ENCODE measurements at regions of chr17 and their contacts with region 1.

Region 1: GRCh38 chr17:7856883-7857723 is at the start of gene NAA38:
- DNase-seq: peak; percentile 96
- ATAC-seq: peak; percentile 84
- H3K4me3 Mint-ChIP-seq: no peak within 1 kb of the TSS
- H3K27ac Mint-ChIP-seq: no peak within 1 kb of the TSS
- H3K4me1 Mint-ChIP-seq: peaks cover 21% of the 10 kb centered on the region
- H3K27me3 Mint-ChIP-seq: peaks cover 19% of the 10 kb centered on the region
- CTCF ChIP-seq: no peak
- total RNA-seq, gene NAA38: 41.8 to 46.3 TPM (median 43.4 TPM) in 3 replicates

Region 2: GRCh38 chr17:7825206-7825990 is 31.7 kb before region 1 on chr17:
- CTCF ChIA-PET with region 1: interaction called, 11 read pairs
- POLR2A ChIA-PET with region 1: no interaction called
- DNase-seq: no peak
- ATAC-seq: no peak
- H3K4me3 Mint-ChIP-seq: no peak overlapping the region
- H3K27ac Mint-ChIP-seq: no peak overlapping the region
- H3K4me1 Mint-ChIP-seq: peaks cover 12% of the 10 kb centered on the region
- H3K27me3 Mint-ChIP-seq: peaks cover 60% of the 10 kb centered on the region
- CTCF ChIP-seq: no peak

Region 3: DNA sequence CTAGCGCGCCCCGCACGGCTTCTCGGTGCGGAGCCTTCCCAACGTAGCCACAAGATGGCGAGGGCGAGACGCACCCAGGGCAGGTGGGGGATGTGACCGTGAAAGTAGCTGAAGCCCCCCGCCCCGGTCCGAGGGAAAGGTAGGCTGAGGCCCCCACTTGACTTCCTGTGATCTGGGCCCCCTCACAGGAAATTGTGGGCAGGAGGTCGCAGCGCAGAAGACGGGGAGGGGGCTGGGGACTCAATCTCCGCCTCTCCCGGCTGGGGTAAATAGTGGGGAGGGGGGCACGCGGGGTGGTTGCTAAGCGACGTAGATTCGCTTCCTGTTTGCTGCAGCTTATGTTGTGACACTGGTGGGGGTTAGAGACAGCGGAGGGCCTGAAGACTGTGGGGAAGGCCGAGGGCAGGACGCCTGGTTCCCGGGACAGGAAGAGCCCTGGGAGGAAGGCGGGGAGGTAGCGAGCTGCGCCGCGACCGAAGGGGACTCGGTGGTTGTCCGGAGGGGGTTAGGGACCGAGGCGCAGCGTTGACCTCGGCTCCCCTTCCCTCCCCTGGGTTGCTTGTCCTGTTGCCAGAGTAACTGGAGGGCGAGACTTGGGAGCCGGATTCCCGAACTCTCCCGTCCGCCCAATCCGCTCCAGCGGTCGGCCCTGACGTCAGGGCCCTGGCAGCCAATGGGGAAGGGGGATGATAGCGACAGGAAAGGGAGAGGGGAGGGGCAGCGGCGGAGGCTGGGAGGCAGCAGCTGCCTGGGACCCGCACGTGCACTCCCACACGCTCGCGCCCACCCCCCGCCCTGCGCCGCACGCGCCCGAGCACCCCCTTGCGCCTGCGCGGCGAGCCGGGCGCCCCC is 21.9 kb before region 1 on chr17:
- CTCF ChIA-PET with region 1: interaction called, 63 read pairs
- POLR2A ChIA-PET with region 1: interaction called, 8 read pairs
- DNase-seq: peak; percentile 98
- ATAC-seq: peak; percentile 60
- H3K4me3 Mint-ChIP-seq: peak overlapping the region; percentile 93
- H3K27ac Mint-ChIP-seq: peak overlapping the region; percentile 86
- H3K4me1 Mint-ChIP-seq: peaks cover 34% of the 10 kb centered on the region
- H3K27me3 Mint-ChIP-seq: peaks cover 54% of the 10 kb centered on the region
- CTCF ChIP-seq: peak; percentile 45

Region 4: GRCh38 chr17:7844292-7845154 is 12.6 kb before region 1 on chr17:
- CTCF ChIA-PET with region 1: interaction called, 12 read pairs
- POLR2A ChIA-PET with region 1: interaction called, 11 read pairs
- DNase-seq: peak; percentile 89
- ATAC-seq: peak; percentile 81
- H3K4me3 Mint-ChIP-seq: peak overlapping the region; percentile 81
- H3K27ac Mint-ChIP-seq: no peak overlapping the region
- H3K4me1 Mint-ChIP-seq: peaks cover 21% of the 10 kb centered on the region
- H3K27me3 Mint-ChIP-seq: peaks cover 39% of the 10 kb centered on the region
- CTCF ChIP-seq: no peak

Region 5: DNA sequence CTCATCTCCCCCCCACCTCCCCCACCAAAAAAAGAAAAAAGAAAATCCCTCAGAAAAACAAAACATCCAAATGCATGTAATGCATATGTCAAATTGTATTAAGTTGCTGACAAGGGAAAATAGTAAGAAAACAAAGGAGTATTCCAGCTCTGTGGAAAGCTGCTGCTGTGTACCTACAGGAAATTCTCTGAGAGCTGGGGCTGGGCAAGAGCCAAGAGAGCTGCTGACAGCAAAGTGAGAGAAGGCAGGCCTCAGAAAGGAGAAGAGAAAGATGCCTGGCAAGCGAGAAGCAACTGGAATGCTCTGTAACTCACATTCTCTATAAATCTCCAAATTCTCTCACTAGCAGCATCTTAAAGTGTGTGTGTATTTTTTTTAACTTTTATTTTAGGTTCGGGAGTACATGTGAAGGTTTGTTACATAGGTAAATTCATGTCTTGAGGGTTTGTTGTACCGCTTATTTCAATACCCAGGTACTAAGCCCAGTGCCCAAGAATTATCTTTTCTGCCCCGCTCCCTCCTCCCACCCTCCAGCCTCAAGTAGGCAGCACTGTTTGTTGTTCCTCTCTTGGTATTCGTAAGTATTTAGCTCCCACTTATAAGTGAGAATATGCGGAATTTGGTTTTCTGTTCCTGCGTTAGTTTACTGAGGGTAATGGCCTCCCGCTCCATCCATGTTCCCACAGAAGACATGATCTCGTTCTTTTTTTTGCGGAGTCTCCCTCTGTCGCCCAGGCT is 99.3 kb after region 1 on chr17:
- CTCF ChIA-PET with region 1: no interaction called
- POLR2A ChIA-PET with region 1: no interaction called
- DNase-seq: no peak
- ATAC-seq: no peak
- H3K4me3 Mint-ChIP-seq: no peak overlapping the region
- H3K27ac Mint-ChIP-seq: no peak overlapping the region
- H3K4me1 Mint-ChIP-seq: peaks cover 11% of the 10 kb centered on the region
- H3K27me3 Mint-ChIP-seq: peaks cover 5% of the 10 kb centered on the region; the same call in 1 of the 2 replicates
- CTCF ChIP-seq: no peak